Mucosa of descending colon (tissue), 3 donors: ENCODE measurements at regions of chr5 and their contacts with region 1.

Region 1: GRCh38 chr5:135024956-135025729 is 8.9 kb downstream of the PITX1 start:
- DNase-seq: no peak
- ATAC-seq: peak; percentile 28
- H3K4me3 ChIP-seq: no peak overlapping the region
- H3K4me1 ChIP-seq: no peaks in the 10 kb centered on the region
- CTCF ChIP-seq: no peak

Region 2: DNA sequence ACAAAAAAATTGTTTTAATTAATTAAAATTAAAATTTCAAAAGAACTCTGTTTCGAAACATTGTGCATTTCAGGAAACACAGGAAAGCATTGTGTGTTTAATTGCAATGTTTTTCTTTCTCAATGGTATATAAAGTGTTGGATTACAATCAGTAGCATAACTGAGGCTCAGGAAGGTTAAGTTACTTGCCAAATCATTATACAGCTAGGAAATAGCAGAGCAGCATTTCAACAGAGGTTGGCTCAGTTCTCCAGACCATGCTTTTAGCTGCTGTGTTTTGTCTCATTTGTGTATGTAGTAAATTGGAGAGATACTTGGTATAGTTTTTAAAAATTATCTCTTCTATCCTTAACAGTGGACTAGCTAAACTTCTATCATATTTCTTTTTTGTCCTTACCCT is 316.8 kb before region 1 on chr5:
- intact Hi-C with region 1: no loop called
- DNase-seq: no peak
- ATAC-seq: no peak
- H3K4me3 ChIP-seq: no peak overlapping the region
- H3K4me1 ChIP-seq: no peaks in the 10 kb centered on the region
- CTCF ChIP-seq: no peak

Region 3: GRCh38 chr5:135185481-135186065 is 160.4 kb after region 1 on chr5:
- intact Hi-C with region 1: loop called in 1 of 2 experiments (anchors 10 kb)
- DNase-seq: peak in 1 of 3 donors; percentile 45
- ATAC-seq: peak; percentile 48
- H3K4me3 ChIP-seq: no peak overlapping the region
- H3K4me1 ChIP-seq: peaks cover 4% of the 10 kb centered on the region
- CTCF ChIP-seq: no peak